ENCODE measurements at regions of chr16 and their contacts with region 1.

Region 1: DNA sequence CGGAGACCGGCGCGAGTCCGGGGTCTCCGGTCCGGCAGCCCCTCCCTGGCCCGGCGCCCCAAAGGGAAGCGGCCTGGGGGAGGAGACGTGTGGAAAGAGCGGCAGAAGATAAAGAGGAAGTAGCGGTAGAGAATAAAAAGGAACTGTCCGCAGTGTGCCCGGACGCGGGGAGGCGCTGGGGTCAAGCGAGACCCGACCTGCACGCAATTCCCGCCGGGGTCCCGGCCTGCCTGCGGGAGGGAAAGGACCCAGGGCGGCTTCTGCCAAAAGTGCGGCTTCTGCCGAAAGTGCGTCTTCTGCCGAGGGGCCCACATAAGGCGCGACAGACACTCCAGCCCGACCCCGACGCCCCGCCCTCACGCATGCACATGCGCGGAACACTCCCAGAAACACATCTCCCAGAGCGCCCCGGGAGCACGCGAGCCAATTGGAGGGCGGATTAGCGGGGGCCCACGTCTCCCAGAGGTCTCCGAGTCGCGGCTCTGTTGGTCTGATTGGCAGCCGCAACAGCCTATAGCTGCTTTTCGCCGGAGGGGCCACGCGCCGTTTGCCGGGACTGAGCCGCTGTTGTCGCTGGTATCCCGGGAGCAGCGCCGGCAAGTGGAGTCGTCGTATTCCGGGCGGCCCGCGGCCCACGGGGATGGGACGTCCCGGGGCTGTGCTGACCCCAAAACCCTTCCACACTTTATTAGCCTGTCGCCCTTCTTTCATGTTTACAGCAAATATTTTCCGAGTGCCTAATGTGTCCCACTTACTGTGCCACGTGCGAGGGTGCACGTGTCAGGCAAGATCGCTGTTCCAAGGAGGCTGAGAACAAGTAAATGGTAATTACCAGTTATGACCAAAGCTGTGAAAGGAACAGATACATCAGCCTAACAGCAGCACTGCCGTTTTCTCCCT is 8.0 kb upstream of the MEFV start:
- DNase-seq: peak; percentile 99
- H3K4me3 ChIP-seq: peak overlapping the region; percentile 65
- H3K27ac ChIP-seq: peak overlapping the region; percentile 80
- H3K4me1 ChIP-seq: no peaks in the 10 kb centered on the region
- H3K27me3 ChIP-seq: no peaks in the 10 kb centered on the region
- CTCF ChIP-seq: no peak

Region 2: DNA sequence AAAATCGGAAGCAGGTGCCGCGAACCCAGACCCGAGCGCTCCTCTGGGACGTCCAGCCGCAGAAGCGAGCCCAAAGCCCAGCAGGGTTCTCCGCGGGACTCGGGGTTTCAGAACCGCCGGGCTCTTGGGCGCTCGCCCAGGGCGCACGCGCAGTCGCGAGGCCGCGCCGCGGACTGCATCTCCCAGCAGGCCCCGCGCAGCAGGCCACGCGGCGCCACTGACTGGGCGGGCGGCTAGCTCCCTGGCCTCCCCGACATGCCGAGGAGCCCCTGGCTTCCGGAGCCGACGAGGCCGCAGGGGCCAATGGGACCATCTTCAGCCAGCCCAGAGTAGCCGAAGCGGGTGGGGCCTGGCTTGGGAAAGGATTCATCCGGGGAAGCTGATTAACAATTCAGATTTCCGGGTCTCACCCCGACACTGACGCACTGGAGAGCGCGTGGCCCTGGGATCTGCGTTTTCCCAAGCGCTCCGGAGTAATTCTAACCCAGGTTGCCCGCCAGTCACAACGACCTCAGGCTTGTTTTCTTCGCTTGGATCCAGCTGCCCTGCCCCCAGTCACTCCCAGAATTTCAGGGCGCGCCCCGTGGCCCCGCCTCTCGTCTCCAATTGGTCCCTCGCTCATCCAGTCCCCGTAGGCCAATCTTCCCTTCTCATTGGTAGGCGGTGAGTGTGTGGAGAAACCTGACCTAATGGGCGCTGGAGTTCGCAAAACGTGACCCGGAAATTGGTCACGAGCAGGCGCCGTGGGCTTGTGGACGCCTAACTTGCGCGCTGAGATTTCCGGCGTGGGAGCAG is 18.5 kb after region 1 on chr16 and contains the start of gene ZNF263:
- CTCF ChIA-PET with region 1: interaction called, 3 read pairs
- POLR2A ChIA-PET with region 1: no interaction called
- intact Hi-C with region 1: loop called (anchors 2 kb)
- DNase-seq: peak; percentile 98
- H3K4me3 ChIP-seq: peak within 1 kb of the TSS; percentile 71
- H3K27ac ChIP-seq: peak within 1 kb of the TSS; percentile 99
- H3K4me1 ChIP-seq: peaks cover 4% of the 10 kb centered on the region
- H3K27me3 ChIP-seq: no peaks in the 10 kb centered on the region
- CTCF ChIP-seq: no peak
- total RNA-seq, gene ZNF263: 30.0 and 34.8 TPM in 2 replicates

Region 3: DNA sequence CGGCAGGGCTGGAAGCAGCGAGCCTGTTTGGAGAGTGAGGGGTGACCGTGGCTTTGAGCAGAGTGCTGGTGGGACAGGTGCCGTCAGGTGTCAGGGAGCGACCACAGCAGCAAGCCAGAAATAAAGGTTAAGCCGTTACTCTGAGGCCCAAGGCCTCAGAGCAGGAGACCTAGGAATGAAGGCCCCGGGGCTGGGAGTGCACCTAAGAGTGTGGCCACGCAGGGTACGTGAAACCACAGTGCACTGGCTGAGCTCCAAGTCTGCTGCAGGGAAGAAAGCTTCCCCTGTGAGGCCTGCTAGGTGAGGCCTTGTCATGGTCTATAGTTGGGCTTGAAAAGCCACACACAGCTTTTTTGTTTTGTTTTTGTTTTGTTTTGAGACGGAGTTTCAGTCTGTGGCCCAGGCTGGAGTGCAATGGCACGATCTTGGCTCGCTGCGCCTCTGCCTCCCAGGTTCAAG is 245.1 kb after region 1 on chr16:
- CTCF ChIA-PET with region 1: no interaction called
- POLR2A ChIA-PET with region 1: no interaction called
- intact Hi-C with region 1: loop called (anchors 10 kb)
- DNase-seq: no peak
- H3K4me3 ChIP-seq: no peak overlapping the region
- H3K27ac ChIP-seq: no peak overlapping the region
- H3K4me1 ChIP-seq: no peaks in the 10 kb centered on the region
- H3K27me3 ChIP-seq: no peaks in the 10 kb centered on the region
- CTCF ChIP-seq: no peak